ENCODE measurements at regions of chr1 and their contacts with region 1.

Region 1: GRCh38 chr1:156500797-156501499 is 373 bp upstream of the MEF2D start:
- DNase-seq: peak; percentile 94
- H3K4me3 ChIP-seq: peak overlapping the region; percentile 98
- H3K27ac ChIP-seq: peak overlapping the region; percentile 98
- H3K4me1 ChIP-seq: peaks cover 66% of the 10 kb centered on the region
- CTCF ChIP-seq: peak; percentile 82

Region 2: GRCh38 chr1:154863315-154864174 is 1637.4 kb before region 1 on chr1:
- CTCF ChIA-PET with region 1: no interaction called
- POLR2A ChIA-PET with region 1: no interaction called
- intact Hi-C with region 1: loop called (anchors 10 kb)
- DNase-seq: peak; percentile 83
- H3K4me3 ChIP-seq: peak overlapping the region; percentile 59
- H3K27ac ChIP-seq: peak overlapping the region; percentile 91
- H3K4me1 ChIP-seq: peaks cover 98% of the 10 kb centered on the region
- CTCF ChIP-seq: peak; percentile 93

Region 3: DNA sequence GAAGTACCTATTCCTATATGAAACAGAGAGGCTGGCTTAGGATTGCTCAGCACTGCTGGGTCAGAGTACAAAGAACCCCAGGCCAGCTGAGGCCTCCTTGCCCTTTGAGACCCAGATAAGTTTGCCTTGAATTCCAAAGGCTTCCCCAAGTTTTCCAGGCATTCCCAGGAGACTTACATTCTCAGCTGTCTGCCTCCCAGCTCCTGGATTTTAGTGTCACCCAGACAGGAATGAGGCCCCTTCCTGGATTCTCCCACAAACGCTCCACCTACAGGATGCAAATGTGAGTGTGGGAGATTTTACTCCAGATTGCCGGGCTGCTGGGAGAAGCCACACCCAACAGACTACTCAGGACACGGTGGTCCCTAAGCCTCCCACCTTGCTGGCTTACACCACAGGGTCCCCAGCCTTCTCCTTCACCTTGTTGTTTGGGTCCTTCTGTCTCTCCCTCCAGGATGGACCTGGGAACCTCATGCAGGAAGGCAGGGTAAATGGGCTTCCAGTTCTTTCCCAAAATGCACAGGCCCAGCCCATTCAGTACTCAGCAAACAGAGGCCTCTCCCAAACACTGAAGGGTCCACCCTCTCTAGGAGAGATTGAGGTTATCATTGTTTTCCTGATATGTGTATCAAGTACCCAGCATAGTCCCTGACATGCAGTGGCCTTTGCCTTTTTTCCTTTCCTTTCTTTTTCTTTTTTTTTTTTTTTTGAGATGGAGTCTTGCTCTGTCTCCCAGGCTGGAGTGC is 121.4 kb before region 1 on chr1:
- CTCF ChIA-PET with region 1: no interaction called
- POLR2A ChIA-PET with region 1: no interaction called
- intact Hi-C with region 1: no loop called
- DNase-seq: no peak
- H3K4me3 ChIP-seq: no peak overlapping the region
- H3K27ac ChIP-seq: no peak overlapping the region
- H3K4me1 ChIP-seq: no peaks in the 10 kb centered on the region
- CTCF ChIP-seq: no peak

Region 4: DNA sequence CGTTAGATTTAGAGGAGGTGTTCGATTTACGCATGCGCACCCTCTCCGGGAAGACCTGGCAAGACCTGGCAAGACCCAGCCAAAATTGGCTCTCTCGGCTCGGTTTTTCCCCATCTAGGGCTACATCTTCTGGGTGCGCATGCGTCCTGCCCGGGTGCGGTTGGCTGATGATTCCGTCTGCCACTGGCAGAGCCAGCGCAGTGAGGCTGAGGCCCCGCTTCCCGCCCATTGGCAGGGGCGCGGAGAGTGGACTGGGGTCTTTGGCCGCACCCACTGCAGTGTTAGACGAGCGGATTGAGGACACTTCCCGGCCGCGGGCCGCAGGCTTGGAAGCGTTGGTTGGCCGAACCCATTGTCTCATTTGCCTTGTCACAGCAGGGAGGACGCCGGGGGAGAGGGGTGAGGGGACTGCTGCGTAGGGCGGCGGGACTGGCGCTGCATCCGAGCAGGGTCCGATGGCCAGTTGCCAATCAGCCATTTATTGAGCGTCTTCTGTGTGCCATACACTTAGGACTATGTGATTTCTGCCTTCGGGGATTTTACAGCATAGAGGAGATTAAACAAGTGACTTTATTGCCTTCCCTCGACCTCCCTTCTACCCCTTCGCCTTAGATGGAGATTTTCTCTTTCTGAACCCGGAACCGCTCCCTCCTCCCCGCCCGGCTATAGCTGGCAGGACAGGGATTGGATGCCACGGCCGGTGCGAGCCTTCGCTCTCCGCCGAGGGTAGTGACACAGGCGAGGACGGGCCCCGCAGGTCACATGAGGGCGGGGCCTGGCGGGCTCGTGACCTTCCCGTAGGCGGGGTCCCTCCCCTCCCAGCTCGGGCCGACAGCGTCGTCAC is 44.1 kb before region 1 on chr1:
- CTCF ChIA-PET with region 1: interaction called, 4 read pairs
- POLR2A ChIA-PET with region 1: interaction called, 10 read pairs
- intact Hi-C with region 1: loop called (anchors 2 kb)
- DNase-seq: peak; percentile 97
- H3K4me3 ChIP-seq: peak overlapping the region; percentile 66
- H3K27ac ChIP-seq: peak overlapping the region; percentile 82
- H3K4me1 ChIP-seq: peaks cover 20% of the 10 kb centered on the region
- CTCF ChIP-seq: 0 out of 2 replicates have a peak, but pooled peaks have one; percentile 6

Region 5: GRCh38 chr1:156489166-156489934 is 11.6 kb before region 1 on chr1:
- CTCF ChIA-PET with region 1: interaction called, 27 read pairs
- POLR2A ChIA-PET with region 1: interaction called, 179 read pairs
- intact Hi-C with region 1: loop called (anchors 1 kb)
- DNase-seq: peak; percentile 67
- H3K4me3 ChIP-seq: peak overlapping the region; percentile 98
- H3K27ac ChIP-seq: peak overlapping the region; percentile 98
- H3K4me1 ChIP-seq: peaks cover 93% of the 10 kb centered on the region
- CTCF ChIP-seq: no peak; the same call in 1 of the 2 replicates

Region 6: DNA sequence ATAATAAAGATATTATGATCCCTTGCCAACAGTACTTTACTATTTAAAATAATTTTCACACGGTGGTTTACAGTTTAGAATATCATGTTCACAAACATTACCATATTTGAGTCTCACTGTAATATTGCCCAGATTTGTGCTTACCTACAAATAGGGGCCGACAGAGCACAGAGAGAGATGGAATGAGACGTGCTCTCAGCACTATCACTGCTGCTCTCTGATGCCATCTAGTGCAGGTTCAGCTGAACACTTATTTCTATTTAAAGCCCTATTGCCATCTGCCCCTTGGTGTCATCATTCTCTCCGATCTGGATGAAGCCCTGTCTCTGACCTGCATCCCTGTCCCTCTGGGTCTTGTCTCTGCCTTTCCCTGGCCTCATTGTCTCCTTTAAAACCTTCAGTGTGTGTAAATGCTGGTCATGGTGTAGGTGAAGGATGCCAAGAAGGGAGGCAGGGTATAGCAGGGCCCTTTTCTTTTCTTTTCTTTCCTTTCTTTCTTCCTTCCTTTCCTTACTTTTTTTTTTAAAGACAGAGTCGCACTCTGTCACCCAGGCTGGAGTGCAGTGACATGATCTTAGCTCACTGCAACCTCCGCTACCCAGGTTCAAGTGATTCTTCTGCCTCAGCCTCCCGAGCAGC is 107.2 kb after region 1 on chr1:
- CTCF ChIA-PET with region 1: no interaction called
- POLR2A ChIA-PET with region 1: no interaction called
- intact Hi-C with region 1: loop called (anchors 2 kb)
- DNase-seq: peak; percentile 87
- H3K4me3 ChIP-seq: no peak overlapping the region
- H3K27ac ChIP-seq: no peak overlapping the region
- H3K4me1 ChIP-seq: peaks cover 25% of the 10 kb centered on the region
- CTCF ChIP-seq: peak; percentile 91